ENCODE measurements at regions of chr12 and their contacts with region 1.

Region 1: GRCh38 chr12:5745265-5745888 is 199.7 kb downstream of the ANO2 start:
- DNase-seq: peak; percentile 66
- ATAC-seq: peak; percentile 90

Region 2: GRCh38 chr12:5796171-5796958 is 51.0 kb after region 1 on chr12:
- intact Hi-C with region 1: loop called (anchors 5 kb)
- DNase-seq: peak; percentile 64
- ATAC-seq: peak; percentile 70

Region 3: DNA sequence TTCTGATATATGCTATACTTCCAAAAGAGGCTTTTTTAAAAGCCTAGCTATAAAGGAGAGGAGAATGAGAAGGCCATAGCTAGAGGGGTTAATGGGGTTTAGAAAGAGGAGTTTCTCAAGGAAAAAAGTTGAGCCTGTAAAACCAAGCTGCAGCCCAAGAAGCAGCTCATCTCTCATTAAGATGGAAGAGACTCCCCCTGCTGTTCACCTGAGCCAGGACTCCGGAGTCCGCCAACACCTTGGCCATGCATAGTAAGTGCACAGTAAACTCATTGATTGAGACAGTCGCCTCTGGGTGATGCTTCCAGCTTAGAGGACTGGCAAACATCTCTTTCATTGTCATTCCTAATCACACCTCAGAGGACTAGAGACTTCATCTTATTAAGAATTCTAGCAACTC is 153.5 kb after region 1 on chr12:
- intact Hi-C with region 1: no loop called
- DNase-seq: no peak
- ATAC-seq: no peak

Measured in Right ventricle myocardium inferior (tissue), 1 donor.